CD14-positive monocyte (primary cell): ENCODE measurements at regions of chr18 and their contacts with region 1.

Region 1: DNA sequence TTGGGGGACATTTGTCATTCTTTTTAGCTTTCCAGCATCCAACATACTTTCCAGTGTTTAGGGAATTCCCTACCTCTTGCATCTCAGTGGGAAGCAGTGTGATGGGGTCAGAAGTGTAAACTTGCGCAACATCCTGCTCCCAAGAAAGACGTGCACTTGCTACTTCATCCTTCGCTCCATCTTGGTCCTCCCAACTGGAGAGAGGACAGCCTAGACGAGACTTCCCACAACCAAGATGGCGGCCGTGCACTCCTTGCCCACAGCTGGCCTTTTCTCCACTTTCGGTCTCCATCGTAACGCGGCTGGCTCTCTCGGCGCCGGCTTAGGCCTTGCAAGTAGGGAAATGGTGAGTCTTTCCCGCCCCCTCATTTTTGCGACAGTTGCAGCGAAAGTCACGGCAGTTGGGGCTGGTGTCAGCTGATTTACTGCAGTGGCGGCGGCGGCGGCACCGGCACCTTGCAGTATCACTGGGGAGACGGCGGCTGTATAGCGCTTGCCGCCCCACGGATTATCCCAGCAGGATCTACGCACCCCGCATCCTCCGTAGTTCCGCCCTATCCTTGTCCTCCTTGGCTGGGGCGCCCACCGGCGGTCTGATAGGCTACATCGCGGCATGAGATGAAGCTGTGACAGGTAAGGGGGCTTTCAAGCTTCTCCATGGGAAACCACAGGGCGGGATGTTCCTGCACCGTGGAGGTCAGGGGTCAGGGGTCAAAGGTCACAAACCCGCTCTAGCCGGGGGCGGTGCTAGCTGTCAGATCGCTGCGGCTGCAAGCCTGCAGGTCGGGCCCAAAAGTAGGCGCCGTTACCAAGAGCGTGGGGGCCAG is at the start of gene WDR7:
- DNase-seq: peak; percentile 93 to 96 (median 94)
- H3K4me3 ChIP-seq: peak within 1 kb of the TSS; percentile 64 to 92 (median 86)
- H3K4me3 Mint-ChIP-seq: peak within 1 kb of the TSS; percentile 94 to 95
- H3K27ac ChIP-seq: peak within 1 kb of the TSS; percentile 87 to 90
- H3K27ac Mint-ChIP-seq: peak within 1 kb of the TSS; percentile 93 to 97 (median 96)
- H3K4me1 ChIP-seq: peaks cover 48 to 57% of the 10 kb centered on the region in 2 donors
- H3K4me1 Mint-ChIP-seq: peaks cover 58% of the 10 kb centered on the region
- H3K27me3 ChIP-seq: no peaks in the 10 kb centered on the region
- H3K27me3 Mint-ChIP-seq: no peaks in the 10 kb centered on the region
- CTCF ChIP-seq: no peak
- polyA plus RNA-seq, gene WDR7: 9.1 to 23.6 (median 9.5) TPM

Region 2: GRCh38 chr18:55322178-55322735 is 1328.9 kb before region 1 on chr18:
- intact Hi-C with region 1: loop called in 1 of 2 experiments (anchors 10 kb)
- DNase-seq: peak; percentile 55 to 58 (median 56)
- H3K4me3 ChIP-seq: peak overlapping the region; percentile 87 to 98 (median 95)
- H3K4me3 Mint-ChIP-seq: peak overlapping the region; percentile 91 to 96
- H3K27ac ChIP-seq: peak overlapping the region; percentile 48 to 70
- H3K27ac Mint-ChIP-seq: peak overlapping the region; percentile 70 to 91 (median 88)
- H3K4me1 ChIP-seq: peaks cover 21 to 33% of the 10 kb centered on the region in 2 donors
- H3K4me1 Mint-ChIP-seq: peaks cover 34% of the 10 kb centered on the region
- H3K27me3 ChIP-seq: no peaks in the 10 kb centered on the region
- H3K27me3 Mint-ChIP-seq: peaks cover 0 to 3% (median 0%) of the 10 kb centered on the region in 3 donors
- CTCF ChIP-seq: no peak

Region 3: GRCh38 chr18:55589625-55590291 is 1061.4 kb before region 1 on chr18:
- intact Hi-C with region 1: loop called (anchors 5 to 10 kb)
- DNase-seq: peak; percentile 92 to 94 (median 94)
- H3K4me3 ChIP-seq: peak overlapping the region; percentile 59 to 99 (median 81)
- H3K4me3 Mint-ChIP-seq: peak overlapping the region; percentile 81 to 94
- H3K27ac ChIP-seq: peak overlapping the region; percentile 58 to 83
- H3K27ac Mint-ChIP-seq: peak overlapping the region; percentile 72 to 92 (median 86)
- H3K4me1 ChIP-seq: peaks cover 17 to 34% of the 10 kb centered on the region in 2 donors
- H3K4me1 Mint-ChIP-seq: peaks cover 26% of the 10 kb centered on the region
- H3K27me3 ChIP-seq: no peaks in the 10 kb centered on the region
- H3K27me3 Mint-ChIP-seq: peaks cover 0 to 5% (median 3%) of the 10 kb centered on the region in 3 donors
- CTCF ChIP-seq: no peak

Region 4: DNA sequence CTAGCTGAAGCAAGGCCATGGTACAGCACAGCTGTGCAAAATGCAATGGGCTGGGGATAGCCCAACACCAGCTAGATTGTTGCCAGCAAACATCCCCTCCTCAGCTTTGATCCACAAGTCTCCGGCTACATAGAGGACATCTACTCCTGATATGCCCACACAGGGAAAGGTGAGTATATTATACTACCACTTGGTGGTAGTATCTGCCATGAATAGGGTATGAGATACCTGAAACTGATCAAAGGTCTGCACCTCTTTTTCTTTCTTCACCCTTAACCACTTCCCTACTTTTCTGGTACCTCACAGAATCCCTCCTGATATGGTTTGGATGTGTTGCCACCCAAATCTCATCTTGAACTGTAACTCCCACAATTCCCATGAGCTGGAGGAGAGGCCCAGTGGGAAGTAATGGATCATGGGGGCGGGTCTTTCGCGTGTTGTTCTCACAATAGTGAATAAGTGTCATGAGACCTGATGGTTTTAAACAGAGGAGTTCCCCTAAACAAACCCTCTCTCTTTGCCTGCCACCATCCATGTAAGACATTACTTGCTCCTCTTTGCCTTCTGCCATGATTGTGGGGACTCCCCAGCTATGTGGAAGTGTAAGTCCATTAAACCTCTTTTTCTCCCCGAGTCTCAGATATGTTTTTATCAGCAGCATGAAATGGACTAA is 292.4 kb before region 1 on chr18:
- intact Hi-C with region 1: no loop called
- DNase-seq: peak in 1 of 3 donors; percentile 3
- H3K4me3 ChIP-seq: no peak overlapping the region
- H3K4me3 Mint-ChIP-seq: no peak overlapping the region
- H3K27ac ChIP-seq: no peak overlapping the region
- H3K27ac Mint-ChIP-seq: no peak overlapping the region
- H3K4me1 ChIP-seq: no peaks in the 10 kb centered on the region
- H3K4me1 Mint-ChIP-seq: no peaks in the 10 kb centered on the region
- H3K27me3 ChIP-seq: no peaks in the 10 kb centered on the region
- H3K27me3 Mint-ChIP-seq: peaks cover 0 to 1% (median 0%) of the 10 kb centered on the region in 3 donors
- CTCF ChIP-seq: no peak